ENCODE measurements at regions of chr6 and their contacts with region 1.

Region 1: GRCh38 chr6:33288921-33289748 is at the starts of genes PFDN6 and WDR46:
- DNase-seq: peak; percentile 86

Region 2: DNA sequence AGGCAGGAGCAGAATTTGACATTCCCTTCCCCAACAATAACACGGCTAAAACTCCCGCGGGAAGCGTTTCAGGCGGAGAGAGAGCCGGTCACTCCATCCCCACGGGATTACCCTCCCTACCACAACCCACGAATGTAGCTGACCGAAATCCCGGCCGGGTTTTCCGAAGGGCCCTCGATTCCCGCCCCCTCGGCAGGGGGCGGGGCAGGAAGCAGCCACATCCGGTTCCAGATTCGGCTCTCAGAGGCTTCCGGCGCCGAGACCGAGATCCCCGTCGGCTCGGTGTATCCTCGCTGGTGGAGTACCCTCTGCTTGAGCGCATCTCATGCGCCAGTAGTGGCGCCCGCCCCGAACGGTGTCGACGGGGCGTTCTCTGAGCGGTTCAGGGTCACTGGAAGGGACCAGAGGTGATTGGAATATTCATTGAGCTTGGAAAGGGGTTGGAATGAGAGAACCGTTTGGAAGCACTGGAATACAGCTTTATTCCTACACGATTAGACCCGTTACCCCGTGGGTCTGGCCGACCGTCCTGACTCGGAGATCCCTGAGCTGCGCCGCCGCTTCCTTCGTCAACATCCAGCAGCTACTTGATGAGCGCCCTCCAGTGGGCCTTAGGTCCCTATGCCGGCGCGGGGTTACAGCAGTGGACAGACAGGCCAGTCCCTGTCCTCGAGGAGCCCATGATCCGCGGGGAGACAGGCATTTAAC is 10.3 kb after region 1 on chr6:
- CTCF ChIA-PET with region 1: interaction called, 4 read pairs
- POLR2A ChIA-PET with region 1: interaction called, 44 read pairs
- DNase-seq: peak; percentile 86